ENCODE measurements at regions of chr17 and their contacts with region 1.

Region 1: GRCh38 chr17:7844292-7845154 is 10.3 kb upstream of the TMEM88 start:
- DNase-seq: peak; percentile 93
- ATAC-seq: peak; percentile 74

Region 2: GRCh38 chr17:7014261-7014994 is 830.1 kb before region 1 on chr17:
- intact Hi-C with region 1: loop called (anchors 10 kb)
- DNase-seq: peak; percentile 99
- ATAC-seq: peak; percentile 91

Measured in Right ventricle myocardium superior (tissue), 1 donor.